ENCODE measurements at regions of chr16 and their contacts with region 1.

Region 1: DNA sequence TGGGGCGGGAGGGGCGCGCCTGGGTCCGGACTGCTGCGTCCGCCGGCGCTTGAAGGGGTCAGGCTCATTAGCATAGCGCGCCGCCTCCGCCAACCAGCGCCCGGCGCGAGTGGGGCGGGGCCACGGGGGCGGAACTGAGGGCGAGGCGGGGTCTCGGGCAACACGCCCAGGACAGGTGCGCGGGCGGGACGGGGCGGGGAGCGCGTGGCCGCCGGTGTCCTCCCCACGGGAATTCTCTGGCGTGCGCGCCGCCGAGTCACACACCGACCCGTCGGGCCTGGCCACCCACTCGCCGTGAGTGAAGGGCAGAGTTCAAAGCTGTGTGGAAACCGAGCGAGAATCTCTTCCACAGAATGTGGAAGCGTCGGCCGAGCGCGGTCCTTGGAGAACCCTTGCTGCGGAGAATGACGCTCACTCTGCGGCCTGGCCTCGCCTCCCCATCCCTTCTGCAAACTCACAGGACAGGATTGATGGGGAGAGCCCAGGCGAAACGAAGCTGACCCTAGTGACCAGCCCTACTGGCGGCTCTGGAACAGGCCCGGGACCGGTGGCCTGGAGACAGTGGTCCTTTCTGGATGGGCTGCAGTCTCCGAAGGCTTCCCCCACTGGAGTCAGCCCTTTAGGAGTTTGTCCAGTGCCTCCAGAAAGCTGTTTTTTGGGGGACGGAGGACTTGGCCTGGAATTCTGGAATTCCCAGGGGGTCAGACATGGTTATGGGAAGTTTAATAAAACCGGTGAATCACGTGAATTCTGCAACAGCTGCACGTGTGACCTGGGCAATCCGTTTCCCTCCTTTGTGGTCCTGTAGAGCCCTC is at the start of gene SNAI3:
- DNase-seq: peak; percentile 91
- ATAC-seq: peak; percentile 79
- H3K4me3 ChIP-seq: peak within 1 kb of the TSS; percentile 59 to 91 (median 80)
- H3K4me3 Mint-ChIP-seq: peak within 1 kb of the TSS; percentile 81
- H3K27ac ChIP-seq: peak within 1 kb of the TSS; percentile 27 to 48
- H3K27ac Mint-ChIP-seq: peak within 1 kb of the TSS; percentile 72
- H3K4me1 ChIP-seq: peaks cover 29 to 55% of the 10 kb centered on the region in 2 donors
- H3K4me1 Mint-ChIP-seq: peaks cover 41% of the 10 kb centered on the region
- H3K27me3 ChIP-seq: no peaks in the 10 kb centered on the region
- H3K27me3 Mint-ChIP-seq: no peaks in the 10 kb centered on the region
- CTCF ChIP-seq: no peak
- total RNA-seq, gene SNAI3: 8.2 and 8.8 TPM in 2 replicates

Region 2: DNA sequence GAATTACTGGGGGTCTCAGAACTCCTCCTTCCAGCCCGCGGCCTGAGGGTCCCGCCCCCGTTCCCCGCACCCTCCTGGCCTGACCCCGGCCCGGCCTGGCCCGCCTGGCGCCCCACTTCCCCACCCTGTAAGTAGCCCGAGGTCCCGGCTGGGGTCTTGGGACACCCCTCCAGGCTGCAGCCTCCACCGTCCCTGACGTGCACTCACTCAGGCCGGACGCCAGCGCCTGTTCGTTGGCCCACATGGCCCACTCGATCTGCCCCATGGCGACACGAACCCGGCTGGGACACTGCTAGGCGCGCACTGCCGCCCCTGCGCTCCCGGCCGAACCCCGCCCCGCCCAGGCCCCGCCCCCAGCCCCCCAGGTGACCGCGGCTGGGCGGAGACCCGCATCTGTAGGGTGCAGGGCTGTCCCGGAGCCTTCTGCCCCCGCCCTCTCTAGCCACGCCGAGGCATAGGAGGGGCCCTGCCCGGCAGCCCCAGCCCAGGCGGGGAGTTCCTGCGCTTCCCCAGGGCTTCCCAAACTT is 35.8 kb before region 1 on chr16 and contains the start of gene CYBA:
- CTCF ChIA-PET with region 1: interaction called, 9 read pairs
- POLR2A ChIA-PET with region 1: interaction called, 4 read pairs
- intact Hi-C with region 1: loop called (anchors 1 kb)
- DNase-seq: peak; percentile 92
- ATAC-seq: peak; percentile 77
- H3K4me3 ChIP-seq: peak within 1 kb of the TSS; percentile 73 to 98 (median 92)
- H3K4me3 Mint-ChIP-seq: peak within 1 kb of the TSS; percentile 96
- H3K27ac ChIP-seq: peak within 1 kb of the TSS; percentile 98 to 99
- H3K27ac Mint-ChIP-seq: peak within 1 kb of the TSS; percentile 98
- H3K4me1 ChIP-seq: peaks cover 46 to 65% of the 10 kb centered on the region in 2 donors
- H3K4me1 Mint-ChIP-seq: peaks cover 43% of the 10 kb centered on the region
- H3K27me3 ChIP-seq: no peaks in the 10 kb centered on the region
- H3K27me3 Mint-ChIP-seq: no peaks in the 10 kb centered on the region
- CTCF ChIP-seq: no peak
- total RNA-seq, gene CYBA: 698 and 701 TPM in 2 replicates

Region 3: DNA sequence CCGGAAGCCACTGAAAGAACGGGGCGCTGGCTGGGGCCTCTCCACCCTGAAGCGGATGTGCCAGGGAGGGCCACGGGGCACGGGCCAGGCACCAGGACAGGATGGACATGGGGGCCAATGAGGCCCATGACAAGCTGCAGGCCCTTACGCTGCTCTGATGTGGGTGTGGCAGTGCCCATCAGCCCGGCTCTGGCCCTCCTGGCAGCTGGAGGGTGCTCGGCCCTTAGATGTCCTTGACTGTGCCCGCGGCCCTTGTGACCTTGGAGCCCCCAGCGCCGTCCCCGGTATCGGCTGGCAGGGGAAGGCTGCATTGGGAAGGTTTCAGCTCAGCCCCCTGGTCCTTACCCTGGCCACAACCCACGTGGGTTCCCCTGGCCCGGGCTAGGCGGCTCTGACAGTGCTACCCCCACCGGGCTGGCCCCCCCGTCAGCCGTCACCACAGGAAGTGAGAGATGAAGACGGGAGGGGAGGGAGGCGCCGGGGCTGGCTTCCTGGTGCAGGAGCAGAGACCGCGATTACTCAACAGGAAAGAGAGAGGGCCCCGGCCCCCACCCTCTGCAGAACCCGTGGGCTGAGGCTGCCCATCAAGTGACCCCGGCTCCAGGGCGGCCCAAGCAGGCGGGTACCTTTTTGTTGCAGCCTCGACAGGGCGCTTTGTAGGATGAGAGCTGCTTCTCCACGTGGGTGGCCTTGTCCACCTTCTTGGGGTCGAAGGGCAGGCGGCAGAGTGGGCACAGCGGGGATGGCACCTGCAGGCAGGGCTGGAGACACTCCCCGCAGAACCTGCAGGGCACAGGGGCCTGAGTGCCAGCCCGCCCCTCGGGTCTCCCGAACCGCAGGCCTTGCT is 14.2 kb after region 1 on chr16:
- CTCF ChIA-PET with region 1: interaction called, 13 read pairs
- POLR2A ChIA-PET with region 1: interaction called, 14 read pairs
- intact Hi-C with region 1: loop called (anchors 1 kb)
- DNase-seq: peak; percentile 91
- ATAC-seq: peak; percentile 79
- H3K4me3 ChIP-seq: peak overlapping the region; percentile 32 to 69 (median 54)
- H3K4me3 Mint-ChIP-seq: peak overlapping the region; percentile 84
- H3K27ac ChIP-seq: peak overlapping the region; percentile 84 to 91
- H3K27ac Mint-ChIP-seq: peak overlapping the region; percentile 96
- H3K4me1 ChIP-seq: peaks cover 61 to 83% of the 10 kb centered on the region in 2 donors
- H3K4me1 Mint-ChIP-seq: peaks cover 70% of the 10 kb centered on the region
- H3K27me3 ChIP-seq: no peaks in the 10 kb centered on the region
- H3K27me3 Mint-ChIP-seq: no peaks in the 10 kb centered on the region
- CTCF ChIP-seq: no peak

Region 4: GRCh38 chr16:88793244-88793954 is 106.8 kb after region 1 on chr16:
- CTCF ChIA-PET with region 1: no interaction called
- POLR2A ChIA-PET with region 1: interaction called, 11 read pairs
- intact Hi-C with region 1: no loop called
- DNase-seq: no peak
- ATAC-seq: peak; percentile 42
- H3K4me3 ChIP-seq: peak overlapping the region in 1 of 5 experiments; percentile 15
- H3K4me3 Mint-ChIP-seq: peak overlapping the region; percentile 34
- H3K27ac ChIP-seq: no peak overlapping the region
- H3K27ac Mint-ChIP-seq: peak overlapping the region; percentile 32
- H3K4me1 ChIP-seq: peaks cover 52 to 62% of the 10 kb centered on the region in 2 donors
- H3K4me1 Mint-ChIP-seq: peaks cover 49% of the 10 kb centered on the region
- H3K27me3 ChIP-seq: no peaks in the 10 kb centered on the region
- H3K27me3 Mint-ChIP-seq: no peaks in the 10 kb centered on the region
- CTCF ChIP-seq: no peak

Measured in B cell (primary cell).